ENCODE measurements at regions of chr16 and their contacts with region 1.

Region 1: GRCh38 chr16:2537453-2538379 is at the start of gene PDPK1:
- DNase-seq: peak; percentile 97
- ATAC-seq: peak; percentile 93
- H3K4me3 Mint-ChIP-seq: peak within 1 kb of the TSS; percentile 83
- H3K27ac Mint-ChIP-seq: peak within 1 kb of the TSS; percentile 90
- H3K4me1 Mint-ChIP-seq: peaks cover 38% of the 10 kb centered on the region
- H3K27me3 Mint-ChIP-seq: no peaks in the 10 kb centered on the region
- total RNA-seq, gene PDPK1: 30.4 to 34.5 TPM

Region 2: GRCh38 chr16:2178321-2179106 is 359.2 kb before region 1 on chr16:
- CTCF ChIA-PET with region 1: no interaction called
- POLR2A ChIA-PET with region 1: no interaction called
- intact Hi-C with region 1: loop called in 1 of 2 experiments (anchors 1 kb)
- DNase-seq: peak; percentile 70
- ATAC-seq: peak; percentile 80
- H3K4me3 Mint-ChIP-seq: no peak overlapping the region
- H3K27ac Mint-ChIP-seq: no peak overlapping the region
- H3K4me1 Mint-ChIP-seq: no peaks in the 10 kb centered on the region
- H3K27me3 Mint-ChIP-seq: no peaks in the 10 kb centered on the region

Region 3: GRCh38 chr16:2223375-2224182 is 314.1 kb before region 1 on chr16 and contains the start of gene E4F1:
- CTCF ChIA-PET with region 1: no interaction called
- POLR2A ChIA-PET with region 1: no interaction called
- intact Hi-C with region 1: loop called in 1 of 2 experiments (anchors 1 kb)
- DNase-seq: peak; percentile 100
- ATAC-seq: peak; percentile 99
- H3K4me3 Mint-ChIP-seq: peak within 1 kb of the TSS; percentile 78
- H3K27ac Mint-ChIP-seq: peak within 1 kb of the TSS; percentile 13
- H3K4me1 Mint-ChIP-seq: peaks cover 15% of the 10 kb centered on the region
- H3K27me3 Mint-ChIP-seq: no peaks in the 10 kb centered on the region
- total RNA-seq, gene E4F1: 18.0 to 18.6 TPM

Region 4: DNA sequence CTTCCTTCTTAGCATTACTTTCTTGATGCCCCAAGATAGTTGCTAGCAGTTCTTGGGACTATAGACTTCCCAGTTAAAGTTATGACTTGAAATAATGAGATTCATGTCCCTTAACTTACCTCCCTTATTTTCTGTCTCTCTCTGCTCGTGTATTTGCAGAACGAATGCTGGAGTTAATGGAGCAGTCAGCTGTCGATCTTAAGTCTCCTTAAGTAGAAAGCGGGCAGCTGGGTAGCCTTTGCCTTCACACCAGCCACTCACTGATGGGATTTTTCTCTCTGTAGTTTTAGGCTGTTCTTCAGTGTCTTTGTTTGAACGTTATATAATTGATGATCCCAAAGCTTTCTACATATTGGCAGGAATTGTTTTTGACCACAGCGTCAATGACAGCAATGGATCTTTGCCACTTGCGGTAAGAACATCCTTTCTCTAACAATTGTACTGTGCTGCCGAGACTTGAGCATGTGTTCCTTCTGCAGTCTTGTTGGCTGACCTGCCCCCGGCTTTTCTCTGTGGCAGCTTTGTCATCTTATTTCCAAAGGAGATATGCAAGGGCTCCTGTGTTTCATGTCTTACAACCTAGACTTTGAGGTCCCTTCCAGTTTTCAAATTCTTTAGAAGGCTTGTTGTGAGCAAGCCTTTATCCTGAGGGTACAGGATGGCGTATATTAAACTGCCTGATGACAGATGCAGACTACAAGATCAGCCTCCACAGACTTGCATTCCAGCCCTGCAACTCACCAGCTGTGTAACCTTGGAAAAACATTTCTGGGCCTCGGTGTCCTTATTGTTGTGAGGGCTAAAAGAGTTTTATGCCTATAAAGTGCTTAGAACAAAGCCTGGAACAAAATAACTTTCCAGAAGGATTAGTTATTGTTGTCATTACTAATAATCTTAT is 172.1 kb before region 1 on chr16:
- CTCF ChIA-PET with region 1: no interaction called
- POLR2A ChIA-PET with region 1: no interaction called
- intact Hi-C with region 1: no loop called
- DNase-seq: no peak
- ATAC-seq: no peak
- H3K4me3 Mint-ChIP-seq: no peak overlapping the region
- H3K27ac Mint-ChIP-seq: no peak overlapping the region
- H3K4me1 Mint-ChIP-seq: no peaks in the 10 kb centered on the region
- H3K27me3 Mint-ChIP-seq: peaks cover 26% of the 10 kb centered on the region

Region 5: GRCh38 chr16:2436110-2436509 is 101.6 kb before region 1 on chr16:
- CTCF ChIA-PET with region 1: no interaction called
- POLR2A ChIA-PET with region 1: no interaction called
- intact Hi-C with region 1: no loop called
- DNase-seq: no peak
- ATAC-seq: no peak
- H3K4me3 Mint-ChIP-seq: no peak overlapping the region
- H3K27ac Mint-ChIP-seq: no peak overlapping the region
- H3K4me1 Mint-ChIP-seq: peaks cover under 1% of the 10 kb centered on the region
- H3K27me3 Mint-ChIP-seq: no peaks in the 10 kb centered on the region

Region 6: DNA sequence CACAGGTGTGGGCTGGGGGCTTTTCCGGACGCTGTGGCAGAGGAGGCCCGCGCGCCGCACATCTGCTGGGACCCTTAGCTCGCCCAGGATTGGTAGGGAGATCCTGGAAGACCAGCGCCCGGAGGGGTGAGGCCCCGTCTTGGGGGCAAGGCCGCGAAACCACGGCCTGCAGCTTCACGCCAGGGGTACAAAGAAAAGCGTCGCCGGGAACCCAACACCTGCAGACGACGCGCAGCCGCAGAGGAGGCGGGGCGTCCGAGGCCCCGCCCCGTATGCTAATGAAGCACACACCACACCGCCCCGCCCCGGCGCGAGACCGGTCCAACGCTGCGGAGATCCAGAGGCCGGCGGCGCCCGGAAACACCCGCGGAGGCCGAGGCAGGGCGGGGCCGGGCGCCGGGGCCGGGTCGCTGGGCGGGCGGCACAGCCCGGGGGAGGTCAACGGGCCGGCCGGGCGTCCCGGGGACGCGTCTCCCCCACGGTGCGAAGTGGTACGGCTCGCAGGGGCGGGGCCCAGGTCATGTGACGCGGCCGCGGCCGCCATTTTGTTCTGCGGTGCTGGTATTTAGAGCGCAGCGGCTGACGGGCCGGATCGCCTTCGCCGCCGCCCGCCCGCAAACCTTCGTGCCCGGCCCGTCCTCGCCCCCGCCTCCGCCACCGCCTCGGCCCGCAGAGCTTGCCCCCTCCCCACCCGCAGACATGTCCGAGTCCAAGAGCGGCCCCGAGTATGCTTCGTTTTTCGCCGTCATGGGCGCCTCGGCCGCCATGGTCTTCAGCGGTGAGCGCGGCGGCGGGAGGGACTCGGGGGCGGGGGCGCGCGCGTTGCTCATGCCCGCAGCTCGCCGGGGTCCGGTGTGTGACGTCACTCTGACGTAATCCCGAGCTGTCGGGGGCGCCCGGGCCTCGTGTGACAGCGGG is 24.1 kb before region 1 on chr16 and contains the start of gene ATP6V0C:
- CTCF ChIA-PET with region 1: no interaction called
- POLR2A ChIA-PET with region 1: no interaction called
- intact Hi-C with region 1: loop called (anchors 1 to 2 kb)
- DNase-seq: peak; percentile 95
- ATAC-seq: peak; percentile 90
- H3K4me3 Mint-ChIP-seq: peak within 1 kb of the TSS; percentile 93
- H3K27ac Mint-ChIP-seq: peak within 1 kb of the TSS; percentile 95
- H3K4me1 Mint-ChIP-seq: peaks cover 44% of the 10 kb centered on the region
- H3K27me3 Mint-ChIP-seq: no peaks in the 10 kb centered on the region
- total RNA-seq, gene ATP6V0C: 91.7 to 130 TPM

Region 7: GRCh38 chr16:2614761-2615191 is 77.1 kb after region 1 on chr16:
- CTCF ChIA-PET with region 1: no interaction called
- POLR2A ChIA-PET with region 1: no interaction called
- intact Hi-C with region 1: no loop called
- DNase-seq: peak; percentile 2
- ATAC-seq: no peak
- H3K4me3 Mint-ChIP-seq: no peak overlapping the region
- H3K27ac Mint-ChIP-seq: no peak overlapping the region
- H3K4me1 Mint-ChIP-seq: no peaks in the 10 kb centered on the region
- H3K27me3 Mint-ChIP-seq: no peaks in the 10 kb centered on the region

Region 8: DNA sequence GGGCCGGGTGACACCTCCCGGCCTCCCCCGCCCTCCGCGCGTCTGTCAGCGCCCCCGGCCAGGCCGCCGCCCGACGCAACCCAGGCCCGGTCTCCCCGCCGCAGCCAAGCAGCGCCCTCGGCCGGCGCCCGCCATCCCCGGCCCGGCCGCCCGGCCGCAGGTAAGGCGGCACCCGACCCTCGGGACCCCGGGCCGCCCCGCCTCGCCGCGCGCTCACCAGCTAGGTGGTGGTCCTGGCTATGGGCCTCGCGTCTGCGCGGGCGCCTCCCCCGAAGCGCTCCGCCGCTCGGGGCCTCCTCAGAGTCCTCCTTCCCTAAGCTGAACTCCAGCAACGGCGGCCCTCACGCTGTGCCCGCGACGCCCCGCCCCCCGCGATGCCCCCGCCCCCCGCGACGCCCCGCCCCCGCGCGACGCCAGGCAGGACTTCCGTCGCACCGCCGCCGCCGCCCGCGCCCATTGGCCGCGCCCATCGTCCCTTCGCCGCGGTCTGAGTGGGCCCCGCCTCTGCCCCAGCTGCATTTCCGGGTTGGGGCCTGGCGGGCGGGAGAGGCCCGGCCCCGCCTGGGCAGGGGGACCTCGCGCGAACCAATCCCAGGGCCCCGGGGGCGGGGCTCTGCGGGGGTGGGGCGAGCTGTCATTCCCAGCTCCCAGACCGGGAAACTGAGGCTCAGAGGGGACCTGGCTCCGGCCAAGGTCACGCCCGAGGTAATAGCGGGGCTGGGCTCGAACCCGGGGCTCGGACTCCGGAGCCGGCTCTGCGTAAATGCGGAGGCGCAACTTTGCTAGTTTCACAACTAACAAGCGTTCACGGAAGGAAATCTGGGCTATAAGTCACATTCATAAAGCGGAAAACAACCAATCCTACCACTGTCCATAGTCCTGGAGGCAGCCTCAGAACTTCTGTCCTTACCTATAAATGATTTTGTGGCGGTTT is 135.6 kb after region 1 on chr16:
- CTCF ChIA-PET with region 1: no interaction called
- POLR2A ChIA-PET with region 1: no interaction called
- intact Hi-C with region 1: loop called in 1 of 2 experiments (anchors 1 kb)
- DNase-seq: peak; percentile 98
- ATAC-seq: peak; percentile 97
- H3K4me3 Mint-ChIP-seq: peak overlapping the region; percentile 73
- H3K27ac Mint-ChIP-seq: peak overlapping the region; percentile 47
- H3K4me1 Mint-ChIP-seq: peaks cover 28% of the 10 kb centered on the region
- H3K27me3 Mint-ChIP-seq: no peaks in the 10 kb centered on the region

Region 9: GRCh38 chr16:2816751-2817339 is 279.1 kb after region 1 on chr16 and contains the start of gene PRSS21:
- CTCF ChIA-PET with region 1: no interaction called
- POLR2A ChIA-PET with region 1: no interaction called
- intact Hi-C with region 1: no loop called
- DNase-seq: peak; percentile 28
- ATAC-seq: no peak
- H3K4me3 Mint-ChIP-seq: no peak within 1 kb of the TSS
- H3K27ac Mint-ChIP-seq: no peak within 1 kb of the TSS
- H3K4me1 Mint-ChIP-seq: no peaks in the 10 kb centered on the region
- H3K27me3 Mint-ChIP-seq: peaks cover 2% of the 10 kb centered on the region
- total RNA-seq, gene PRSS21: 0.69 to 0.71 TPM

Region 10: DNA sequence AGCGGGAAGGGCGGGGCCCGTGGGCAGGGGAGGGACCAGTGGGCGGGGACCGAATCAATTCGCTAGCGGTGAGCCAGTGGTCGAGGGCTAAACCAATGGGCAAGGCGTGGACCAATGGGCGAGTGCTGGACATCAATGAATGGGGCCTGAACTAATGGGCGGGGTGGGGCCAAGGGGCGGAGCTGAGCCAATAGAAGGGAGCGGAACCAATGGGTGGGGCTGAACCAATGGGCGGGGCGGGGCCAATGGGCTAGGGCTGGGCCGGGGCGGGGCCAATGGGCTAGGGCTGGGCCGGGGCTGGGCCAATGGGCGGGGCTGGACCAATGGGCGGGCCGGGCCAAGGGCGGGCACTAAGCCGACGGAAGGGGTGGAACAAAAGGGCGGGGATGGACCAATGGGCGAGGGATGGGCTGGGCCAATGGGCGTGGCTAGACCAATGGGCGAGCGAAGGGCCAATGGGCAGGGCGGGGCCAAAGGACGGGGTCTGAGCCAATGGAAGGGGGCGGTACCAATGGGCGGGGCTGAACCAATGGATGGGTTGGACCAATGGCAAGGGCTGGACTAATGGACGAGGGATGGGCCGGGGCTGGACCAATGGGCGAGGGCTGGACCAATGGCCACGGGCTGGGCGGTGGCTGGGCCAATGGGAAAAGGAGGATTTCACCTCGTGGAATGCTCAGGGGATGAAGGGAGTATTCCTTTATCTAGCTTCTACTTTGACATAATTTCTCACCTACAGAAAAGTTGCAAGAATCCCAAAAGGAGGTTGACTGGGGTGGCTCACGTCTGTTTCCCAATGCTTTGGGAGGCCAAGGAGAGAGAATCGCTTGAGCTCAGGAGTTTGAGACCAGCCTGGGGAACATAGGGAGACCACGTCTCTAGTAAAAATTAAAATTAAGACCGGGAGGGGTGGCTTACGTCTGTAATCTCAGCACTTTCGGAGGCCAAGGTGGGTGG is 368.0 kb after region 1 on chr16:
- CTCF ChIA-PET with region 1: no interaction called
- POLR2A ChIA-PET with region 1: no interaction called
- intact Hi-C with region 1: loop called in 1 of 2 experiments (anchors 1 kb)
- DNase-seq: peak; percentile 100
- ATAC-seq: peak; percentile 81
- H3K4me3 Mint-ChIP-seq: peak overlapping the region; percentile 94
- H3K27ac Mint-ChIP-seq: peak overlapping the region; percentile 8
- H3K4me1 Mint-ChIP-seq: peaks cover 19% of the 10 kb centered on the region
- H3K27me3 Mint-ChIP-seq: no peaks in the 10 kb centered on the region